ENCODE measurements at regions of chr12 and their contacts with region 1.

Region 1: GRCh38 chr12:53701518-53702260 is 25.6 kb downstream of the CALCOCO1 start:
- DNase-seq: peak; percentile 84
- H3K4me3 ChIP-seq: no peak overlapping the region
- H3K27ac ChIP-seq: no peak overlapping the region
- H3K4me1 ChIP-seq: peaks cover 0 to 5% (median under 1%) of the 10 kb centered on the region in 4 donors
- H3K27me3 ChIP-seq: peaks cover 96% of the 10 kb centered on the region
- CTCF ChIP-seq: peak; percentile 81 to 88 (median 85)
- EP300 ChIP-seq: no peak
- POLR2A ChIP-seq: no peak

Region 2: DNA sequence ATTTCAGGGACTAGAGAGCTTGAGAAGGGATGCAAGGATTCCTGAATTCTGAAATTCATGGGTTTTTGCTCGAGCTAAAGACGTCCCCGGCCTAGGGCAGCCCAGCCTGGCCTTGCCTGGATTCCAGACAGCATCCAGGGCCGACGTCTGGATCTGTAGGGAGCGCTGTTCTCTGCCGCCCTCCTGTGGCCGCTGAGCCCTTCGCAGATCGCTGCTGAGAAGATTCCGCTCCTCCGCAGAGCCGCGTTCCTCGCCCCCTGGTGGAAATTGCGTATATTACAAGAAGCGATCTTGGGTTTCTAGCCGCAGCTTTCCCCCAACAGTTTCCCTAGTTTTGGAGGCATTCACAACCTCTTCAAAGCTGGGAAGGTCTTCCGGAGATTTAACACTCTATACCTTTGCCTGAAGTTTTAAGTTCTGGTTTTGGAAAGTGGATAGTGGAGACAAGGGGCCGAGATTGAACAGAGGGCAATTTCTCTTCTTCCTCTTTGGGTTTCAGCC is 45.0 kb after region 1 on chr12:
- in situ Hi-C with region 1: loop called in 3 of 4 experiments (anchors 5 kb)
- intact Hi-C with region 1: loop called (anchors 5 kb)
- DNase-seq: peak; percentile 94
- H3K4me3 ChIP-seq: no peak overlapping the region
- H3K27ac ChIP-seq: no peak overlapping the region
- H3K4me1 ChIP-seq: peaks cover 0 to 21% (median 13%) of the 10 kb centered on the region in 4 donors
- H3K27me3 ChIP-seq: peaks cover 92% of the 10 kb centered on the region
- CTCF ChIP-seq: peak; percentile 99 to 100 (median 99)
- EP300 ChIP-seq: no peak
- POLR2A ChIP-seq: no peak

Region 3: DNA sequence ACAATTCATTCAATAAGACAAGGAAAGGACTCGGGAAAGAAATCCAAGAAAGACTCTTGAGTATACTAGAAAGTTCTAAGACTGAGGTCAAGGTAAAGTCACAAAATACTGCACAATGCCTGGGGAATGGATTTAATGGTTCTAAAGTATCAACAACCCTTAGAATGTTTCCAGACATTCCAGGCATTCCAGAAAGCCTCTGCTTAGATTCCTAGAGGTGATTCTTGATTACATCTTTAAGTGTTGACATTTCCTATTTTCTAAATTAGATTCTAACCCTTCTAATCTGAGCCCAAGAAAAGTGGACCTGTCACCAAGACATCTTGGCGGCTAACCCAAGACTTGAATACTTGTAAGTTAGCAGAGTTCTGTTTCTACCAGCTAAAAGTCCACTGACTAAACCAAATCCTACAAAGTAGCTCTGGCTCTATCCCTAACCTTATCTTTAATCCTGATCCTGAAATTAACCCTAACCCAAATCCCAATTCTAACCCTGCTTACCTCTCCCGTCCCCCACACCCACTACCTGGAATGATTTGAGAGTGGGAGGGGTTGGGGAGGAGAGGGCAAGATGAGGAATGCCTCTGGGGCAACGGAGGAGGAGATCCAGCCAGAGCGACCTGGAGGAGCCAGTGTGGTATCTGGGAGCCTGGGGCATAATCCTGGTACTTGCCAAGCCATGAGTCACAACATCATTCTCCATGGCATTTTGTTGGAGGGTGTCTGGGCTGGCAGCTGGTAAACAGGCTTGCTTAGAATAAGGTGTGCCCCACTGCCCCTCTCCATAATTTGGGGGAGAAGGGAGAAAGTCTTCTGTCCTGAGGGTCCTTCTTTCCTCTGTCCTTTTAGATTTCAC is 143.5 kb after region 1 on chr12:
- in situ Hi-C with region 1: no loop called
- intact Hi-C with region 1: no loop called
- DNase-seq: no peak
- H3K4me3 ChIP-seq: no peak overlapping the region
- H3K27ac ChIP-seq: no peak overlapping the region
- H3K4me1 ChIP-seq: no peaks in the 10 kb centered on the region
- H3K27me3 ChIP-seq: peaks cover 85% of the 10 kb centered on the region
- CTCF ChIP-seq: no peak
- EP300 ChIP-seq: no peak
- POLR2A ChIP-seq: no peak

Measured in transverse colon (tissue), 4 donors.